ENCODE measurements at regions of chr2 and their contacts with region 1.

Region 1: DNA sequence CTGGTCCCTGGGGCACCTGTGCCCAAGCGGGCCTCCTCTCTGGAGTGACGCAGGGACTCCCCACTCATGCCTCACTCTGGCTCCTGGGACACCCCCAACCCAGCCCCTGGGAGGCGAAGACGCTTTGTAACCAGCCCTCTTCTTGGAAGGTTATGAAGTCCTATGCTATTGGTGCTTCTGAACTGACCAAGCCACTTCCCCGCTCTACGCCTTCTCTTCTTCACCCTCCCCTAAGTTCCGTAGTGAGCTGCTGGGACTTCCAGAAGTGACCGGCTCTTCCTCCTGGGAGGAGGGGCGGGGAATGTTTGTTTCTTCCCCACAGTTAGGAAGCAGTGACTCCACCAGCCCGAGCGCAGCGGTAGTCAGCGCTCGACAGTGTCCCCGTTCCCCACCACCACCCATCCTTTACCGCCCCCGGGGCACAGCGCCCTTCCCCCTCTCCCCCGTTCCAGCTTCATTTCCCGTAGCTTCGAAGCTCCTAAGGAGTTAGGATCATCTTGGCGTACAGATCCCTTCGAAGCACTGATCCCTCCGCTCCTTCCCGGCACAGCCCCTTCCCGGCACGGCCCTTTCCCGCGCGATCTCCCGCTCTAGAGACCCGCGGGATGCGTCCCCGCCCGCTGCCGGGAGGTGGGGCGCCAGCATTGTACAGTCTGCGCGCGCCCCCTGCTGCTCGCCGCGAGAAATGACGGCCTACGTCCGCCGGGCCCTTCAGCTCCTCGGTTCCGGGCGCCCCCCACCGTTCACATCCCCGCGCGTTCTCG is 25.3 kb upstream of the NOTO start:
- DNase-seq: peak; percentile 82 to 87 (median 85)
- H3K4me3 ChIP-seq: peak overlapping the region; percentile 53 to 65
- H3K4me3 Mint-ChIP-seq: peak overlapping the region; percentile 80 to 92 (median 90)
- H3K27ac ChIP-seq: no peak overlapping the region
- H3K27ac Mint-ChIP-seq: peak overlapping the region in 5 of 7 donors; percentile 36 to 90 (median 60)
- H3K4me1 ChIP-seq: peaks cover 23% of the 10 kb centered on the region
- H3K4me1 Mint-ChIP-seq: peaks cover 11 to 21% (median 15%) of the 10 kb centered on the region in 4 donors
- H3K27me3 ChIP-seq: peaks cover 17% of the 10 kb centered on the region
- H3K27me3 Mint-ChIP-seq: peaks cover 10 to 31% of the 10 kb centered on the region in 2 donors

Region 2: GRCh38 chr2:71923887-71924533 is 1253.1 kb before region 1 on chr2:
- CTCF ChIA-PET with region 1: no interaction called
- POLR2A ChIA-PET with region 1: no interaction called
- intact Hi-C with region 1: loop called (anchors 10 kb)
- DNase-seq: peak in 4 of 5 donors; percentile 30 to 46 (median 38)
- H3K4me3 ChIP-seq: no peak overlapping the region
- H3K4me3 Mint-ChIP-seq: peak overlapping the region in 1 of 8 donors; percentile 2
- H3K27ac ChIP-seq: no peak overlapping the region
- H3K27ac Mint-ChIP-seq: peak overlapping the region in 2 of 7 donors; percentile 20 to 51
- H3K4me1 ChIP-seq: no peaks in the 10 kb centered on the region
- H3K4me1 Mint-ChIP-seq: peaks cover 0 to 4% (median 0%) of the 10 kb centered on the region in 4 donors
- H3K27me3 ChIP-seq: no peaks in the 10 kb centered on the region
- H3K27me3 Mint-ChIP-seq: peaks cover 0 to 2% of the 10 kb centered on the region in 2 donors

Region 3: GRCh38 chr2:72993147-72993932 is 183.7 kb before region 1 on chr2:
- CTCF ChIA-PET with region 1: interaction called, 184 read pairs
- POLR2A ChIA-PET with region 1: interaction called, 3 read pairs
- intact Hi-C with region 1: loop called (anchors 1 kb)
- DNase-seq: peak; percentile 43 to 57 (median 49)
- H3K4me3 ChIP-seq: no peak overlapping the region
- H3K4me3 Mint-ChIP-seq: no peak overlapping the region
- H3K27ac ChIP-seq: no peak overlapping the region
- H3K27ac Mint-ChIP-seq: no peak overlapping the region
- H3K4me1 ChIP-seq: no peaks in the 10 kb centered on the region
- H3K4me1 Mint-ChIP-seq: no peaks in the 10 kb centered on the region
- H3K27me3 ChIP-seq: no peaks in the 10 kb centered on the region
- H3K27me3 Mint-ChIP-seq: no peaks in the 10 kb centered on the region

Region 4: GRCh38 chr2:73085691-73086360 is 91.2 kb before region 1 on chr2:
- CTCF ChIA-PET with region 1: interaction called, 143 read pairs
- POLR2A ChIA-PET with region 1: interaction called, 3 read pairs
- intact Hi-C with region 1: loop called (anchors 1 kb)
- DNase-seq: peak; percentile 71 to 80 (median 74)
- H3K4me3 ChIP-seq: no peak overlapping the region
- H3K4me3 Mint-ChIP-seq: no peak overlapping the region
- H3K27ac ChIP-seq: no peak overlapping the region
- H3K27ac Mint-ChIP-seq: peak overlapping the region in 4 of 7 donors; percentile 23 to 53 (median 37)
- H3K4me1 ChIP-seq: no peaks in the 10 kb centered on the region
- H3K4me1 Mint-ChIP-seq: peaks cover 1 to 8% (median 4%) of the 10 kb centered on the region in 4 donors
- H3K27me3 ChIP-seq: no peaks in the 10 kb centered on the region
- H3K27me3 Mint-ChIP-seq: no peaks in the 10 kb centered on the region

Region 5: GRCh38 chr2:73163483-73164367 is 13.3 kb before region 1 on chr2:
- CTCF ChIA-PET with region 1: interaction called, 20 read pairs
- POLR2A ChIA-PET with region 1: no interaction called
- intact Hi-C with region 1: loop called (anchors 1 kb)
- DNase-seq: peak in 4 of 5 donors; percentile 54 to 59 (median 57)
- H3K4me3 ChIP-seq: no peak overlapping the region
- H3K4me3 Mint-ChIP-seq: no peak overlapping the region
- H3K27ac ChIP-seq: no peak overlapping the region
- H3K27ac Mint-ChIP-seq: no peak overlapping the region
- H3K4me1 ChIP-seq: no peaks in the 10 kb centered on the region
- H3K4me1 Mint-ChIP-seq: no peaks in the 10 kb centered on the region
- H3K27me3 ChIP-seq: no peaks in the 10 kb centered on the region
- H3K27me3 Mint-ChIP-seq: peaks cover 8 to 14% of the 10 kb centered on the region in 2 donors

Region 6: GRCh38 chr2:73233154-73233931 is 56.3 kb after region 1 on chr2 and contains the start of gene PRADC1:
- CTCF ChIA-PET with region 1: interaction called, 10 read pairs
- POLR2A ChIA-PET with region 1: interaction called, 18 read pairs
- intact Hi-C with region 1: loop called (anchors 2 kb)
- DNase-seq: peak; percentile 92 to 97 (median 94)
- H3K4me3 ChIP-seq: peak within 1 kb of the TSS; percentile 86 to 99
- H3K4me3 Mint-ChIP-seq: peak within 1 kb of the TSS; percentile 91 to 99 (median 98)
- H3K27ac ChIP-seq: peak within 1 kb of the TSS; percentile 91
- H3K27ac Mint-ChIP-seq: peak within 1 kb of the TSS; percentile 83 to 97 (median 91)
- H3K4me1 ChIP-seq: peaks cover 33% of the 10 kb centered on the region
- H3K4me1 Mint-ChIP-seq: peaks cover 26 to 56% (median 34%) of the 10 kb centered on the region in 4 donors
- H3K27me3 ChIP-seq: no peaks in the 10 kb centered on the region
- H3K27me3 Mint-ChIP-seq: no peaks in the 10 kb centered on the region
- total RNA-seq, gene PRADC1: 7.0 to 7.4 TPM

Measured in CD4-positive, alpha-beta memory T cell (primary cell).